ENCODE measurements at regions of chr6 and their contacts with region 1.

Region 1: GRCh38 chr6:169800668-169801395 is 49.4 kb downstream of the ERMARD start:
- DNase-seq: peak; percentile 82
- ATAC-seq: peak; percentile 91
- H3K4me3 ChIP-seq: no peak overlapping the region
- H3K27ac ChIP-seq: peak overlapping the region; percentile 4; the same call in 1 of the 2 replicates
- H3K4me1 ChIP-seq: peaks cover 10% of the 10 kb centered on the region; the same call in 1 of the 2 replicates
- H3K27me3 ChIP-seq: peaks cover 18% of the 10 kb centered on the region
- CTCF ChIP-seq: no peak
- POLR2A ChIP-seq: no peak
- RAD21 ChIP-seq: no peak

Region 2: GRCh38 chr6:169536446-169537170 is 264.2 kb before region 1 on chr6:
- CTCF ChIA-PET with region 1: no interaction called
- POLR2A ChIA-PET with region 1: no interaction called
- dilution Hi-C with region 1: no loop called
- in situ Hi-C with region 1: no loop called
- intact Hi-C with region 1: no loop called
- DNase-seq: peak; percentile 93
- ATAC-seq: peak; percentile 80
- H3K4me3 ChIP-seq: no peak overlapping the region
- H3K27ac ChIP-seq: peak overlapping the region; percentile 87; the same call in 1 of the 2 replicates
- H3K4me1 ChIP-seq: peaks cover 13% of the 10 kb centered on the region
- H3K27me3 ChIP-seq: no peaks in the 10 kb centered on the region
- CTCF ChIP-seq: no peak
- POLR2A ChIP-seq: no peak
- RAD21 ChIP-seq: no peak

Region 3: DNA sequence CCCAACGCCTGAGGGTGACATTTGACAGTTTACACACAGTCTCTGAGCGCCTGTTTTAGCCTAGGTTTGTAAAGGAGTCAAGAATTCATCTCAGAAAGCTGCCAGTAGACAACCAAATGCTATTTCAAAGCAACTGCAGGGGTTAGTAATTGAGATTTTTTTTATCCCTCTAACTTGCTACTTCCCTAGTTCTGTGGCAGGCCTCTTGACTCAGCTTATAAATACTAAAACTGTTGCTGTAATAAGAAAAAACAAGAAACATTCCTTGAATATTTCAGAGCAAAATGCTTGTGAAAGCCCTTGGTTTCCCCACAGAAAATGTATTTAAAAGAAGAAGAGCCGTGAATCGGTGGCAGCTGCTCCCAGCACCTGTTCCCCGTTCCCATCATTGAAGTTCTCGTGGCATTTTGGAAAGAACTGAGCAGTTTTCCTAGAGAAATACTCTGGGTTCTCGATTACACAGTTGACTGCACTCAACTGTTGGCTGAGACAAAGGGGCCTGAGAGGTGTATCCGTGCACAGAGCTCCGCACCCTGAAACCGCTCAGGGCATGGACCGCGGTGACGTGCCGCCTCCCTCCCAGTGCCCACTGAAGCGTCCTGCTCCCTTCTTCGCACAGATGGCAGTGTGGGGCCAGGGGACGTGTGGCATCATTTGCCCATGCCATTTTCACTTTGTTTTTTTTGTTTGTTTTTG is 469.2 kb after region 1 on chr6:
- CTCF ChIA-PET with region 1: no interaction called
- POLR2A ChIA-PET with region 1: no interaction called
- dilution Hi-C with region 1: no loop called
- in situ Hi-C with region 1: no loop called
- intact Hi-C with region 1: loop called (anchors 1 kb)
- DNase-seq: peak; percentile 43
- ATAC-seq: peak; percentile 88
- H3K4me3 ChIP-seq: no peak overlapping the region
- H3K27ac ChIP-seq: peak overlapping the region; percentile 17; the same call in 1 of the 2 replicates
- H3K4me1 ChIP-seq: peaks cover 9% of the 10 kb centered on the region
- H3K27me3 ChIP-seq: peaks cover 7% of the 10 kb centered on the region
- CTCF ChIP-seq: no peak
- POLR2A ChIP-seq: no peak
- RAD21 ChIP-seq: no peak